ENCODE measurements at regions of chr16 and their contacts with region 1.

Region 1: GRCh38 chr16:56866943-56867830 is 2.2 kb downstream of the SLC12A3 start:
- DNase-seq: peak in 1 of 2 experiments; percentile 63
- H3K4me3 ChIP-seq: no peak overlapping the region
- H3K27ac ChIP-seq: no peak overlapping the region
- H3K4me1 ChIP-seq: no peaks in the 10 kb centered on the region
- H3K27me3 ChIP-seq: no peaks in the 10 kb centered on the region
- CTCF ChIP-seq: peak in 2 of 3 experiments; percentile 50 to 70; a peak in 3 of 4 replicates
- EP300 ChIP-seq: no peak
- POLR2A ChIP-seq: no peak
- RAD21 ChIP-seq: peak; percentile 53 to 71

Region 2: DNA sequence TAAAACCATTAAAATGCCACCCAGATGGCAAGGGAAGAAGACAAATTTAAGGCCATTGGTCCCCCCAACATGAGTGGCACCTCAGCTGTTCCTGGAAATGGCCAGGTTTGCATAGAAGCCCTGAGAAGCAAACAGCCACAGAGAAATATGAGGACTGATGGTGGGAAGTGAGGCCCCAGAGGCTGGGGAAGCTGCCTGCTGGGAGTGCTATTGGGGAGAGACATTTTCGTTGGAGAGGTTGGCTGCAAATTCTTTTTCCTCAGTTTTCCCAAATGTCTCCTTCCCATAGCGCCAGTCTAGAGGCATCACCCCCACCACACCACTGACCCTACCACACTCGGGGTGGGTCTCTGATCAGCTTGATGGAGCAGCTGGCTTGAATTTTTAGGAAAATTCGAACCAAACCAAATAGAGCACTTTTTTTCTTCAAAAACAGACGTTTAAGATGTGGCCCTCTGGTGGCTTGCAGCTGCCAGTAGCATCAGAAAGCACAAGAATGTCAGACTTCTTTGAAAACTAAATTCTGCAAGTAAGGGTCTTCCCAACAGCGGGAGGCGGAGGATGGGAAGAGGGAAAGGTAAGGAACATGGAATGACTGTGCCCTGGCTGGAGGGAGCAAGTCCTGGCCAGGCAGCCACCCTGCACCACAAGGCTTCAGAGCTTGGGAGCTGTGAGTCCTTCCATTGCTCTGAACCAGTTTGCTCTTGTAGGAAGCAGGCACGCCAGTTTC is 15.4 kb before region 1 on chr16:
- CTCF ChIA-PET with region 1: interaction called, 102 read pairs
- POLR2A ChIA-PET with region 1: no interaction called
- DNase-seq: peak in 1 of 2 experiments; percentile 29
- H3K4me3 ChIP-seq: no peak overlapping the region
- H3K27ac ChIP-seq: no peak overlapping the region
- H3K4me1 ChIP-seq: peaks cover 2 to 11% (median 7%) of the 10 kb centered on the region in 4 experiments; a peak in 5 of 7 replicates
- H3K27me3 ChIP-seq: no peaks in the 10 kb centered on the region
- CTCF ChIP-seq: peak in 2 of 3 experiments; percentile 48 to 69; a peak in 3 of 4 replicates
- EP300 ChIP-seq: no peak
- POLR2A ChIP-seq: no peak
- RAD21 ChIP-seq: peak; percentile 45

Region 3: GRCh38 chr16:56856876-56857447 is 10.2 kb before region 1 on chr16:
- CTCF ChIA-PET with region 1: interaction called, 102 read pairs
- POLR2A ChIA-PET with region 1: no interaction called
- DNase-seq: no peak
- H3K4me3 ChIP-seq: no peak overlapping the region
- H3K27ac ChIP-seq: no peak overlapping the region
- H3K4me1 ChIP-seq: peaks cover 0 to 6% (median 2%) of the 10 kb centered on the region in 4 experiments; a peak in 4 of 7 replicates
- H3K27me3 ChIP-seq: no peaks in the 10 kb centered on the region
- CTCF ChIP-seq: no peak
- EP300 ChIP-seq: no peak
- POLR2A ChIP-seq: no peak
- RAD21 ChIP-seq: no peak

Region 4: GRCh38 chr16:56950881-56951771 is 83.9 kb after region 1 on chr16:
- CTCF ChIA-PET with region 1: interaction called, 37 read pairs
- POLR2A ChIA-PET with region 1: interaction called, 3 read pairs
- DNase-seq: peak in 1 of 2 experiments; percentile 74
- H3K4me3 ChIP-seq: no peak overlapping the region
- H3K27ac ChIP-seq: no peak overlapping the region
- H3K4me1 ChIP-seq: no peaks in the 10 kb centered on the region
- H3K27me3 ChIP-seq: no peaks in the 10 kb centered on the region
- CTCF ChIP-seq: peak; percentile 78 to 90 (median 88)
- EP300 ChIP-seq: no peak
- POLR2A ChIP-seq: no peak
- RAD21 ChIP-seq: peak; percentile 83

Measured in H1 (cell line).